ENCODE measurements at regions of chr3 and their contacts with region 1.

Region 1: GRCh38 chr3:9890249-9891071 is at the start of gene JAGN1:
- DNase-seq: peak; percentile 78 to 92 (median 88)
- ATAC-seq: peak; percentile 93
- H3K4me3 ChIP-seq: peak within 1 kb of the TSS; percentile 99
- H3K4me3 Mint-ChIP-seq: peak within 1 kb of the TSS; percentile 91 to 100 (median 97)
- H3K27ac ChIP-seq: peak within 1 kb of the TSS; percentile 100
- H3K27ac Mint-ChIP-seq: peak within 1 kb of the TSS; percentile 92 to 99 (median 99)
- H3K4me1 ChIP-seq: peaks cover 8 to 15% of the 10 kb centered on the region in 2 donors
- H3K4me1 Mint-ChIP-seq: peaks cover 25 to 48% (median 36%) of the 10 kb centered on the region in 7 donors
- H3K27me3 ChIP-seq: no peaks in the 10 kb centered on the region
- H3K27me3 Mint-ChIP-seq: peaks cover 0 to 2% (median 0%) of the 10 kb centered on the region in 5 donors
- total RNA-seq, gene JAGN1: 16.0 to 34.5 (median 28.1) TPM

Region 2: DNA sequence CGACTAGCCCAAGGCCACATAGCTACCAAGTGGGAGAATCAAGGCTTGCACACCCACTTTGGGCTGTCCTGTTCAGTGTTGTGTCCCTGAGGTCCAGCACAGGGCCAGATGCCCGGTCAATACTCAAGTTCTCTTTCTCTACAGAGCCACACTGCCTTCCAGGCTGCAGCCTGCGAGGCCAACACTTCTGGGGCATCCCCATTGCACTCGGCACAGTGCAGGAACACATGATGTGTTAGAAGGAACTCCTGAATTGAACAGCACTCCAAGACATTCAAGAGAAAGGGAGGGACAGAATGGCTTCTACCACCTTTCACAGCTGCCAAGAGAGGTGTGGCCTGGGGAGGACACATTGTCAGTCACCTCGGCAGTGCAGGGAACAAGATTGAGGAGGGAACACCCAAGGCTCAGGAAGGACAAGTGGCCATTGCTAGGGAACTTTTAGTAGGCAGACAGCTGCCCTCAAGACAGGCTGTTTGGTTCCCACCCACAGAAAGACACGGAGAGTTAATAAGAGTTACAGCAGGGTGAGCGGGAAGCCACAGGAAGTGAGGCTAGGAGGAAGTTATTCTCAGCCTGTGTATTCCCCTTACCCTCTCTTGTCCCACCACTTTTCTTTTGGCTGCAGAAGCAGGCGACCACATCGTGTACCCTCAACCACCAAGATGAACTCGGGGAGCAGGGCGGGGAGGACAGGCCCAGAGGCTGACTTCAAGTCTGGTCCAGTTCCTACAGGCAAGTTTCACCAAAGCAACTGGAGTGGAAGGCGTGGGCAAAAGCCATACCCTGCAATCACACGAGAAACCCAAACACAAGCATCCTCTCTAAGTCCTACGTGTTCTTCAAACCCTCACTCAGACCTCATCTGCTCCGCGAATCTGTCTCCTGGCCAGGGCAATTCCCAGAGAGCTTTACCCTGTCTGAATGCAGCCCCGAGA is 710.4 kb before region 1 on chr3:
- CTCF ChIA-PET with region 1: no interaction called
- POLR2A ChIA-PET with region 1: no interaction called
- intact Hi-C with region 1: no loop called
- DNase-seq: peak in 4 of 9 donors; percentile 13 to 28 (median 14)
- ATAC-seq: peak; percentile 72
- H3K4me3 ChIP-seq: peak overlapping the region; percentile 50
- H3K4me3 Mint-ChIP-seq: peak overlapping the region; percentile 79 to 88 (median 84)
- H3K27ac ChIP-seq: peak overlapping the region; percentile 4
- H3K27ac Mint-ChIP-seq: peak overlapping the region; percentile 48 to 94 (median 76)
- H3K4me1 ChIP-seq: peaks cover 0 to 20% of the 10 kb centered on the region in 2 donors
- H3K4me1 Mint-ChIP-seq: peaks cover 18 to 48% (median 30%) of the 10 kb centered on the region in 7 donors
- H3K27me3 ChIP-seq: no peaks in the 10 kb centered on the region
- H3K27me3 Mint-ChIP-seq: peaks cover 0 to 5% (median 0%) of the 10 kb centered on the region in 5 donors

Region 3: DNA sequence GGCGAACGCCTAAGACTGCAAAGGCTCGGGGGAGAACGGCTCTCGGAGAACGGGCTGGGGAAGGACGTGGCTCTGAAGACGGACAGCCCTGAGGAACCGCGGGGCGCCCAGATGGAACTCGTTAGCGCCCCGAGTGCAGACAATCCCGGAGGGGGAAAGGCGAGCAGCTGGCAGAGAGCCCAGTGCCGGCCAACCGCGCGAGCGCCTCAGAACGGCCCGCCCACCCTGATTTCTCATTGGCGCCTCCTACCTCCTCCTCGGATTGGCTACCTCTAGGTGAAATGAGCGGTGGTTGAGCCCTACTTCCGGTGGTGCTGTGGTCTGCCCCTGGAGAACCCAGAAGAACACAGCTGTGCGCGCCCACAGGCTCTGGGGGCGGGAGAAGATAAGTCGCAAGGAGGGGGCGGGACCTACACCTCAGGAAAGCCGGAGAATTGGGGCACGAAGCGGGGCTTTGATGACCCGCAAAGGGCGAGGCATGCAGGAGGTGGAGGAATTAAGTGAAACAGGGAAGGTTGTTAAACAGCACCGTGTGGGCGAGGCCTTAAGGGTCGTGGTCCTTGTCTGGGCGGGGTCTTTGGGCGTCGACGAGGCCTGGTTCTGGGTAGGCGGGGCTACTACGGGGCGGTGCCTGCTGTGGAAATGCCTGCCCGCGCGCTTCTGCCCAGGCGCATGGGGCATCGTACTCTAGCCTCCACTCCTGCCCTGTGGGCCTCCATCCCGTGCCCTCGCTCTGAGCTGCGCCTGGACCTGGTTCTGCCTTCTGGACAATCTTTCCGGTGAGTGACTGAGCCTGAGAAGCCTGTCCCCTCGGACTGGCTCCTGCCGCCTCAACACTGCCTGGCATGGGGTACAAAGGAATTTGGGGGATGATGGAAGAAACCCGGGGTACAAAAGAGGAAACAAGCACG is 140.6 kb before region 1 on chr3 and contains the start of gene OGG1:
- CTCF ChIA-PET with region 1: no interaction called
- POLR2A ChIA-PET with region 1: interaction called, 3 read pairs
- intact Hi-C with region 1: loop called (anchors 1 to 2 kb)
- DNase-seq: peak; percentile 77 to 95 (median 94)
- ATAC-seq: peak; percentile 97
- H3K4me3 ChIP-seq: peak within 1 kb of the TSS; percentile 84
- H3K4me3 Mint-ChIP-seq: peak within 1 kb of the TSS; percentile 93 to 98 (median 96)
- H3K27ac ChIP-seq: peak within 1 kb of the TSS; percentile 73
- H3K27ac Mint-ChIP-seq: peak within 1 kb of the TSS; percentile 86 to 96 (median 93)
- H3K4me1 ChIP-seq: peaks cover 13 to 22% of the 10 kb centered on the region in 2 donors
- H3K4me1 Mint-ChIP-seq: peaks cover 30 to 58% (median 47%) of the 10 kb centered on the region in 7 donors
- H3K27me3 ChIP-seq: no peaks in the 10 kb centered on the region
- H3K27me3 Mint-ChIP-seq: no peaks in the 10 kb centered on the region
- total RNA-seq, gene OGG1: 18.8 to 42.9 (median 31.6) TPM

Region 4: DNA sequence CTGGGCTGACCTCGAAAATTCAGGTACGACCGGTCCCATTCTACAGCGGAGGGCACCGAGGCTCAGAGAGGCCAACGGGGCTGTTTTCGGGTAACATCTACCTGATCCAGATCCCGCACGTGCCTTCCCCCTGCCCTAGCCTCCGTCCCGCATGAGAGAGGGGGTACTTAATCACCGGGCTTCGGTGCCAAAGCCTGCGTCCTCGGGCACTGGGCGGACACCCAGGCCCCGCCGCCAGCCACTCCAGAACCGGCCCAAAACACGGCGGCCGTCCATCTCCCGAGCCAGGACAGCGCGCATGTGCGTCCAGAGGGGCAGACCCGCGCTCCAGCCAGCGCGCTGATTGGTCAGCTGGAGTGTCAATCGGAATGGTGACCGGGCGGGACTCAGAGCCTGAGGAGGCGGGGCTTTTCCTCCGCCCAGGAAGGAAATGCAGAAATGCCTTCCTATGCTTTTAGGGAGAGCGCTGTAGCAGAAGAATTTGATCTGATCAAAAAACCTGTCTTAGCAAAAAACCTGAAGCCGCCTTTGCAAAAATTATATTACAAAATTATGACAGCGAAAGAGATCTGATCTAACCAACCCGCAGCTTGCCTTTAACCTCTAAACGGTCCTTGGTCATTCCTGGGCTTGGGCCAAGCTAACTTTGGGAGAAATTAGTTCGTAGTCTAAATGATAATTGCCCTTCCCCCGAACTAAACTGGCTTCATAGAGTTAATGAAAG is 46.6 kb before region 1 on chr3 and contains the start of gene RPUSD3:
- CTCF ChIA-PET with region 1: interaction called, 4 read pairs
- POLR2A ChIA-PET with region 1: interaction called, 3 read pairs
- intact Hi-C with region 1: loop called (anchors 1 kb)
- DNase-seq: peak; percentile 90 to 99 (median 94)
- ATAC-seq: peak; percentile 100
- H3K4me3 ChIP-seq: peak within 1 kb of the TSS; percentile 83
- H3K4me3 Mint-ChIP-seq: peak within 1 kb of the TSS; percentile 93 to 100 (median 97)
- H3K27ac ChIP-seq: peak within 1 kb of the TSS; percentile 82
- H3K27ac Mint-ChIP-seq: peak within 1 kb of the TSS; percentile 68 to 94 (median 91)
- H3K4me1 ChIP-seq: peaks cover 4 to 5% of the 10 kb centered on the region in 2 donors
- H3K4me1 Mint-ChIP-seq: peaks cover 12 to 40% (median 23%) of the 10 kb centered on the region in 7 donors
- H3K27me3 ChIP-seq: no peaks in the 10 kb centered on the region
- H3K27me3 Mint-ChIP-seq: no peaks in the 10 kb centered on the region
- total RNA-seq, gene RPUSD3: 17.7 to 61.2 (median 58.0) TPM

Region 5: DNA sequence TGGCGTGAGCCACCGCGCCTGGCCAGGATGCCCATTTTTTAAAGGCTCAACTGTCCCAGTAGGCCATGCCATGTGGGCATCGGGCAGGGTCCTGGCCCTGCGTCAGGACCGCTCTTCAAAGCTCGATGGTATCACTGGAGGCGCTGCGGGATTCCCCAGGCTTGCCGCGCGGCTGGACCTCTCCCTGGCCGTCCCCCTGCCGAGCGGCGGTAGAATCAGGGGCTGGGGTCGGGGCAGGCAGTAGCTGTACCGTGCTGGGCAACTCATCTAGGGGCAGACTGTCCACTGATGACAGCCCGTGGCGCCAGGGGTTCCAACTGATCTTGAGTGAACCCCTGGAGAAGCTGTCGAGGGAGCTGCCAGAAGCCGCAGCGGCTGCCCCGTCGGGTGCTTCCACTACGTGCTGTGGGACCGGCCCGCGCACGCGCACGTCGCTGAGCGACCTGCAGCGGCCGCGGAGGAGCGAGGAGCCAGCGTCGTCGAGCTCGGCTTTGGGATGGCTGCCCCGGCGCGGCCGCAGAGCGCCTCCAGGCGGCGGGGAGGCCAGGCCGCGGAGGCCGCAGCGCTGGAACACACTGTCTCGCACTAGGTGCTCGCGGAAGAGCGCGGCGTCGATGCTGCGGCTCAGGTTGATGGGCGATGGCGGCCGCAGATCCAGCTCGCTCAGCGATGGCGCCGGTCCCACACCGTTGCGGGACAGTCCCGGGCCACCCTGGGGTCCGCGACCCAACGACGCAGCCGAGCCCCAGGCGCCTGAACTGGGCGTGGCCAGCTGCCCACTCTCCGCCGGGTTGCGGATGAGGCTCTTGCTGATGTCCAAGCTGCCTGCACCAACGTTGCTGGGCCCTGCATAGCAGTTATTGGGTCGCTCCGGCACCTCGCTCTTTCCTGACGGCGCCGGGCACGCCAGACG is 55.9 kb after region 1 on chr3:
- CTCF ChIA-PET with region 1: no interaction called
- POLR2A ChIA-PET with region 1: interaction called, 8 read pairs
- intact Hi-C with region 1: loop called in 1 of 2 experiments (anchors 1 kb)
- DNase-seq: peak; percentile 70 to 88 (median 80)
- ATAC-seq: peak; percentile 94
- H3K4me3 ChIP-seq: peak overlapping the region; percentile 50
- H3K4me3 Mint-ChIP-seq: peak overlapping the region; percentile 42 to 85 (median 78)
- H3K27ac ChIP-seq: peak overlapping the region; percentile 74
- H3K27ac Mint-ChIP-seq: peak overlapping the region in 8 of 9 donors; percentile 56 to 91 (median 82)
- H3K4me1 ChIP-seq: peaks cover 7% of the 10 kb centered on the region in 2 donors
- H3K4me1 Mint-ChIP-seq: peaks cover 8 to 16% (median 11%) of the 10 kb centered on the region in 7 donors
- H3K27me3 ChIP-seq: no peaks in the 10 kb centered on the region
- H3K27me3 Mint-ChIP-seq: no peaks in the 10 kb centered on the region

Region 6: DNA sequence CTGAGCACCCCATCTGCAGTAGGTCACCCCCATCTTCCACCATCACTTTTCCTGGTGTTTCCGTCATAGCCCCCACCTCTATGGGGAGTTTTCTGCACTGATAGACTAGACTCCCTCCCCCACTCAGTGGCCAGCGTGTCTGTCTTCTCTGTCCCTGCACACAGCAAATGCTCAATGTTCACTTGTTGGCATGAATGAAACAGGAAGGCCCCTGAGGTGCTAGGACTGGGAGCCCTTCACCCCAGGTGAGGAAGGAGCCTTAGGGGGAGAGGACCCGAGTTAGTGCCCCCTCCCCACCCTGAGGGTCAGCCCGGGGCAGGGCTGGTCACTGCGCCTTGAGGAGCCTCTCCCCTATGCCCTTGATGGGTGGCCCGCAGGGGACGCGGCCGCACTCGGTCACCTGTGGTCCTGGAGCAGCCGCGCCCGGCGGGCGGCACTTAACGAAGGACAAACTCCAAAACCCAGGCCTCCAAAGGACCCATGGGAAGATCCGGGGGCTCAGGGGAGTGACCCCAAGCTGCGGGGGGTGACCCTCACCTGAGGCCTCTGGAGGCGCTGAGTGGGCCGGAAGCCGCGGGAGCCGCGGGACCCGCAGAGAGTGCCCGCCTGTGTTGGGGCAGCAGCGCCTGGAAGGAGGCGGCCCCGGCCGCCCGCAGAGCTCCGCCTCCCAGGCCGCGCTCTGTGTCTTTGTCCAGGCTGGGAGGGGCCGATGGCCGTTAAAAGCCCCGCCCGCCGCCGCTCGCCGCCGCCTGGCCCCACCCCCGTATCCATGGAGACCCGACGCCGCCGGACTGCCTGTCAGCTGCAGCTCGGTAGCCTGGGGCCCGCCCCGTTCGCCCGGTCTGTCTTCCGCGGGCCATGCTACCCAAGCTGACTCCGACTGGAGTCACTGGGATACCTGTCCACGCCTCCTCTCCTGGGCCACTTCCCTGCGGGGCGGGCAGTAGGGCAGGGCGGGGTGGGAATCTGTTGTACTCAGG is 120.3 kb after region 1 on chr3:
- CTCF ChIA-PET with region 1: no interaction called
- POLR2A ChIA-PET with region 1: no interaction called
- intact Hi-C with region 1: loop called in 1 of 2 experiments (anchors 1 kb)
- DNase-seq: peak; percentile 25 to 91 (median 46)
- ATAC-seq: peak; percentile 90
- H3K4me3 ChIP-seq: peak overlapping the region; percentile 44
- H3K4me3 Mint-ChIP-seq: peak overlapping the region; percentile 24 to 81 (median 70)
- H3K27ac ChIP-seq: peak overlapping the region; percentile 9
- H3K27ac Mint-ChIP-seq: peak overlapping the region in 2 of 9 donors; percentile 28 to 57
- H3K4me1 ChIP-seq: peaks cover 0 to 14% of the 10 kb centered on the region in 2 donors
- H3K4me1 Mint-ChIP-seq: peaks cover 15 to 28% (median 19%) of the 10 kb centered on the region in 7 donors
- H3K27me3 ChIP-seq: no peaks in the 10 kb centered on the region
- H3K27me3 Mint-ChIP-seq: peaks cover 0 to 19% (median 14%) of the 10 kb centered on the region in 5 donors

Region 7: GRCh38 chr3:10142707-10143566 is 252.5 kb after region 1 on chr3:
- CTCF ChIA-PET with region 1: no interaction called
- POLR2A ChIA-PET with region 1: no interaction called
- intact Hi-C with region 1: loop called in 1 of 2 experiments (anchors 2 kb)
- DNase-seq: peak in 2 of 9 donors; percentile 11 to 12
- ATAC-seq: no peak
- H3K4me3 ChIP-seq: peak overlapping the region; percentile 87
- H3K4me3 Mint-ChIP-seq: peak overlapping the region; percentile 85 to 98 (median 96)
- H3K27ac ChIP-seq: peak overlapping the region; percentile 95
- H3K27ac Mint-ChIP-seq: peak overlapping the region; percentile 38 to 98 (median 94)
- H3K4me1 ChIP-seq: peaks cover 10 to 12% of the 10 kb centered on the region in 2 donors
- H3K4me1 Mint-ChIP-seq: peaks cover 14 to 48% (median 37%) of the 10 kb centered on the region in 7 donors
- H3K27me3 ChIP-seq: no peaks in the 10 kb centered on the region
- H3K27me3 Mint-ChIP-seq: no peaks in the 10 kb centered on the region

Region 8: GRCh38 chr3:10160346-10160745 is 269.9 kb after region 1 on chr3:
- CTCF ChIA-PET with region 1: no interaction called
- POLR2A ChIA-PET with region 1: no interaction called
- intact Hi-C with region 1: no loop called
- DNase-seq: no peak
- ATAC-seq: no peak
- H3K4me3 ChIP-seq: no peak overlapping the region
- H3K4me3 Mint-ChIP-seq: no peak overlapping the region
- H3K27ac ChIP-seq: no peak overlapping the region
- H3K27ac Mint-ChIP-seq: no peak overlapping the region
- H3K4me1 ChIP-seq: peaks cover 0 to 9% of the 10 kb centered on the region in 2 donors
- H3K4me1 Mint-ChIP-seq: peaks cover 0 to 18% (median 8%) of the 10 kb centered on the region in 7 donors
- H3K27me3 ChIP-seq: no peaks in the 10 kb centered on the region
- H3K27me3 Mint-ChIP-seq: no peaks in the 10 kb centered on the region